ENCODE measurements at regions of chr12 and their contacts with region 1.

Region 1: GRCh38 chr12:3964439-3964838 is 91.2 kb upstream of the PARP11 start:
- DNase-seq: no peak
- ATAC-seq: no peak
- H3K4me3 ChIP-seq: no peak overlapping the region
- H3K4me3 Mint-ChIP-seq: no peak overlapping the region
- H3K27ac ChIP-seq: no peak overlapping the region
- H3K27ac Mint-ChIP-seq: peak overlapping the region; percentile 66
- H3K4me1 ChIP-seq: peaks cover 24% of the 10 kb centered on the region
- H3K4me1 Mint-ChIP-seq: peaks cover 33% of the 10 kb centered on the region
- H3K27me3 ChIP-seq: no peaks in the 10 kb centered on the region
- H3K27me3 Mint-ChIP-seq: no peaks in the 10 kb centered on the region
- CTCF ChIP-seq: no peak

Region 2: GRCh38 chr12:2593045-2593444 is 1371.4 kb before region 1 on chr12:
- CTCF ChIA-PET with region 1: no interaction called
- POLR2A ChIA-PET with region 1: no interaction called
- intact Hi-C with region 1: no loop called
- DNase-seq: no peak
- ATAC-seq: no peak
- H3K4me3 ChIP-seq: no peak overlapping the region
- H3K4me3 Mint-ChIP-seq: no peak overlapping the region
- H3K27ac ChIP-seq: no peak overlapping the region
- H3K27ac Mint-ChIP-seq: no peak overlapping the region
- H3K4me1 ChIP-seq: no peaks in the 10 kb centered on the region
- H3K4me1 Mint-ChIP-seq: no peaks in the 10 kb centered on the region
- H3K27me3 ChIP-seq: peaks cover 0 to 2% of the 10 kb centered on the region in 2 experiments
- H3K27me3 Mint-ChIP-seq: peaks cover 14% of the 10 kb centered on the region
- CTCF ChIP-seq: no peak

Region 3: GRCh38 chr12:3752741-3753486 is 211.5 kb before region 1 on chr12 and contains the start of gene CRACR2A:
- CTCF ChIA-PET with region 1: no interaction called
- POLR2A ChIA-PET with region 1: no interaction called
- intact Hi-C with region 1: loop called in 1 of 2 experiments (anchors 10 kb)
- DNase-seq: peak; percentile 70 to 92 (median 79)
- ATAC-seq: peak; percentile 78
- H3K4me3 ChIP-seq: peak within 1 kb of the TSS; percentile 92
- H3K4me3 Mint-ChIP-seq: peak within 1 kb of the TSS; percentile 89
- H3K27ac ChIP-seq: peak within 1 kb of the TSS; percentile 92 to 95
- H3K27ac Mint-ChIP-seq: peak within 1 kb of the TSS; percentile 92
- H3K4me1 ChIP-seq: peaks cover 68% of the 10 kb centered on the region
- H3K4me1 Mint-ChIP-seq: peaks cover 71% of the 10 kb centered on the region
- H3K27me3 ChIP-seq: no peaks in the 10 kb centered on the region
- H3K27me3 Mint-ChIP-seq: no peaks in the 10 kb centered on the region
- CTCF ChIP-seq: peak; percentile 80
- total RNA-seq, gene CRACR2A: 23.5 to 27.5 TPM

Region 4: GRCh38 chr12:3885277-3886094 is 79.0 kb before region 1 on chr12:
- CTCF ChIA-PET with region 1: interaction called, 57 read pairs
- POLR2A ChIA-PET with region 1: interaction called, 77 read pairs
- intact Hi-C with region 1: loop called (anchors 1 kb)
- DNase-seq: peak in 10 of 14 experiments; percentile 26 to 83 (median 43)
- ATAC-seq: peak; percentile 46
- H3K4me3 ChIP-seq: no peak overlapping the region
- H3K4me3 Mint-ChIP-seq: no peak overlapping the region
- H3K27ac ChIP-seq: no peak overlapping the region
- H3K27ac Mint-ChIP-seq: peak overlapping the region; percentile 38
- H3K4me1 ChIP-seq: peaks cover 10% of the 10 kb centered on the region
- H3K4me1 Mint-ChIP-seq: peaks cover 17% of the 10 kb centered on the region
- H3K27me3 ChIP-seq: no peaks in the 10 kb centered on the region
- H3K27me3 Mint-ChIP-seq: no peaks in the 10 kb centered on the region
- CTCF ChIP-seq: peak; percentile 97

Region 5: GRCh38 chr12:3905664-3906063 is 58.8 kb before region 1 on chr12:
- CTCF ChIA-PET with region 1: interaction called, 4 read pairs
- POLR2A ChIA-PET with region 1: interaction called, 13 read pairs
- intact Hi-C with region 1: loop called in 1 of 2 experiments (anchors 2 kb)
- DNase-seq: peak in 1 of 14 experiments; percentile 20
- ATAC-seq: peak; percentile 26
- H3K4me3 ChIP-seq: peak overlapping the region; percentile 60
- H3K4me3 Mint-ChIP-seq: peak overlapping the region; percentile 94
- H3K27ac ChIP-seq: peak overlapping the region; percentile 41 to 61
- H3K27ac Mint-ChIP-seq: peak overlapping the region; percentile 89
- H3K4me1 ChIP-seq: peaks cover 16% of the 10 kb centered on the region
- H3K4me1 Mint-ChIP-seq: peaks cover 56% of the 10 kb centered on the region
- H3K27me3 ChIP-seq: no peaks in the 10 kb centered on the region
- H3K27me3 Mint-ChIP-seq: no peaks in the 10 kb centered on the region
- CTCF ChIP-seq: no peak

Region 6: GRCh38 chr12:3928540-3929184 is 35.8 kb before region 1 on chr12:
- CTCF ChIA-PET with region 1: interaction called, 10 read pairs
- POLR2A ChIA-PET with region 1: interaction called, 22 read pairs
- intact Hi-C with region 1: no loop called
- DNase-seq: no peak
- ATAC-seq: no peak
- H3K4me3 ChIP-seq: no peak overlapping the region
- H3K4me3 Mint-ChIP-seq: no peak overlapping the region
- H3K27ac ChIP-seq: no peak overlapping the region
- H3K27ac Mint-ChIP-seq: peak overlapping the region; percentile 17
- H3K4me1 ChIP-seq: peaks cover 53% of the 10 kb centered on the region
- H3K4me1 Mint-ChIP-seq: peaks cover 72% of the 10 kb centered on the region
- H3K27me3 ChIP-seq: no peaks in the 10 kb centered on the region
- H3K27me3 Mint-ChIP-seq: no peaks in the 10 kb centered on the region
- CTCF ChIP-seq: no peak

Region 7: GRCh38 chr12:3947781-3948180 is 16.7 kb before region 1 on chr12:
- CTCF ChIA-PET with region 1: interaction called, 10 read pairs
- POLR2A ChIA-PET with region 1: interaction called, 86 read pairs
- intact Hi-C with region 1: loop called in 1 of 2 experiments (anchors 1 kb)
- DNase-seq: peak in 3 of 14 experiments; percentile 74 to 84 (median 78)
- ATAC-seq: peak; percentile 77
- H3K4me3 ChIP-seq: no peak overlapping the region
- H3K4me3 Mint-ChIP-seq: peak overlapping the region; percentile 52
- H3K27ac ChIP-seq: peak overlapping the region; percentile 84 to 86
- H3K27ac Mint-ChIP-seq: peak overlapping the region; percentile 98
- H3K4me1 ChIP-seq: peaks cover 53% of the 10 kb centered on the region
- H3K4me1 Mint-ChIP-seq: peaks cover 67% of the 10 kb centered on the region
- H3K27me3 ChIP-seq: no peaks in the 10 kb centered on the region
- H3K27me3 Mint-ChIP-seq: no peaks in the 10 kb centered on the region
- CTCF ChIP-seq: no peak

Region 8: DNA sequence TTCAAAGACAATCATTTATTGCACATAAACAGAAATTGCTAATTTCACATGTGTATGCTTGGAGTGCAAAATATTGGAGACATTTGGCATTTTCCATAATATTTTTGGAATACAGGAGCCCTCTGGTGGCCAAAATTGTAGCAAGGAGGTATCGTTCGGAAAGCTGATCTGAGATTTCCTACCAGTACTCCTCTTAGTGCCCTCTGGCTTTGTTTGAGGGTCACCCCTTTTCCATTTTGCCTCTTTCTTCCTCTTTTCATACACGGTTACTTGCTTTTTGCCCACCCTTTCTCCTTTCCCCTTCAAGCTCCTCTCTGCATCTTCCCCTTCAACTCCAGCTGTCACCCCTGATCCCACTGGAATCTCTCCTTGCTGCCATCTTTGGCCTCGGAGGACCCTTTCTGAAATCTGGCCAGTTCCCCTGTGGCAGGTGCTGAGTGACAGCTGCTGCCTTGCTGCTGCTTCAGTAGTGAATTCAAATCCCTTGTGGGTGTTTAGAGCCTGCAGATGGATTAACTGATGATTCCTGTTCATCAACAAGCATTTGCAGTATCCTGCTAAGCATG is 73.4 kb after region 1 on chr12:
- CTCF ChIA-PET with region 1: interaction called, 5 read pairs
- POLR2A ChIA-PET with region 1: interaction called, 5 read pairs
- intact Hi-C with region 1: loop called in 1 of 2 experiments (anchors 2 kb)
- DNase-seq: peak in 5 of 14 experiments; percentile 18 to 61 (median 44)
- ATAC-seq: no peak
- H3K4me3 ChIP-seq: no peak overlapping the region
- H3K4me3 Mint-ChIP-seq: no peak overlapping the region
- H3K27ac ChIP-seq: no peak overlapping the region
- H3K27ac Mint-ChIP-seq: no peak overlapping the region
- H3K4me1 ChIP-seq: no peaks in the 10 kb centered on the region
- H3K4me1 Mint-ChIP-seq: peaks cover 4% of the 10 kb centered on the region
- H3K27me3 ChIP-seq: no peaks in the 10 kb centered on the region
- H3K27me3 Mint-ChIP-seq: no peaks in the 10 kb centered on the region
- CTCF ChIP-seq: peak; percentile 73

Region 9: DNA sequence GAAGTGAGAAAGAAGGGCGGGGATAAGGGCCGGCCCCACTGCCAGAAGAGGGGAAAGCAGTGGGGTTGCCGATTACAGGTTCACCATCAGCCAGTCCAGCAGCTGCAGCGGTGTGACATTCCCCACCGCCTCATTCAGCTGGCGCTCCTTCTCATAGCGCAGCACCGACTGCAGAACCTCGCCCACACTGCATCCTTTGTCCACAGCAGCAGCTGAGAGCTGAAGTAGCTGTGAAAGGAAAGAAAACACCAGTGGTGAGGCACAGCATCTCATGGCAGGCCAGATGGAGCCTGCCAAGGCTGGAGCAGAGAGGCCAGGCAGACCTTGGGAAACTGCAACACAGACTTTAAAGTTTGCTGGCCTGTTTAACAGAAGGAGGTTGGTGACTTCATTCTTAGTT is 651.2 kb after region 1 on chr12:
- CTCF ChIA-PET with region 1: no interaction called
- POLR2A ChIA-PET with region 1: no interaction called
- intact Hi-C with region 1: no loop called
- DNase-seq: no peak
- ATAC-seq: no peak
- H3K4me3 ChIP-seq: no peak overlapping the region
- H3K4me3 Mint-ChIP-seq: no peak overlapping the region
- H3K27ac ChIP-seq: no peak overlapping the region
- H3K27ac Mint-ChIP-seq: no peak overlapping the region
- H3K4me1 ChIP-seq: no peaks in the 10 kb centered on the region
- H3K4me1 Mint-ChIP-seq: no peaks in the 10 kb centered on the region
- H3K27me3 ChIP-seq: no peaks in the 10 kb centered on the region
- H3K27me3 Mint-ChIP-seq: no peaks in the 10 kb centered on the region
- CTCF ChIP-seq: no peak